ENCODE measurements at regions of chrX and their contacts with region 1.

Region 1: DNA sequence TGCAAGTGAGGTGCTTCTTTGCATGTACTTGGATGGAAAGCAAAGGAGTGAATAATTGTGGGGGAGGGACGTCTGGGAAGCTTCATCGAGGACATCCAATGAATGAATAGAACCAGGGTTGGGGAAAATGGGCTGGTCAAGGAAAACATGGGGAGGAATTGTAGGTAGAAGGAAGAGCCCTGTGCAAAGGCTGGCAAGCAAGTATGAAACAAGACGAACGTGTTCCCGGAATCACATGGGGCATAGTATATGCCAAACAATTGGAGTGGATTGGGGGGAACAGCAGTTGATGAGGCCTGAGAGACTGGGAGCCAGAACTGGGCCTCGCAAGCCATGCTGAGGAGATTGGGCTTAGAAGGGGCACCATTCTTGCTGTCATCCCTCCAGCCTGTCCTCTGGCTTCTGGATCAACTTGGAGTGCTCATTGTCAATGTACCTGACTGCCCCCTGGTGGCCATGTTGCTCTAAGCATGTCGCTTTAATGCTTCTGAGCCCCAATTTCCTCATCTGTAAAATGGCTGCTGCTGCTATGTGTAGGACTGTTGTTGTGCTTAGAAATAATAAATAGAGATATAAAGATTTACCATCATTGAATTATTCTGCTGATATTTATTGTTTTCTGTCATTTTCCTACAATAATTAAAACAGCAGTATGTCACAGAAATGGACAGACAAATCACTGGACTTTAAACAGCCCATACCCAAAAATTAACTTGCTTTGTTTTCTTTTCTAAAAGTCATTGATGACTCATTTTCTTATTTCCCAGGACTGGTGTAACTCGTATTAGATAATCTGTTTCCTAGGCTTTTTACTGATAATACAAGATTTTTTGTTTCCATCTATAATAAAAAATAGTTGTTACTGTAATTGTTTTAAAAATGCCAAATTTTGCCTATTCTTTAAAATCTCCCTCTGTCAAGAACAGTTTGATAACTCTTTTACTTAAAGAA is 66.4 kb downstream of the JADE3 start:
- DNase-seq: peak; percentile 34
- H3K4me3 Mint-ChIP-seq: no peak overlapping the region
- H3K27ac Mint-ChIP-seq: no peak overlapping the region
- H3K4me1 Mint-ChIP-seq: no peaks in the 10 kb centered on the region
- H3K27me3 Mint-ChIP-seq: peaks cover 4% of the 10 kb centered on the region

Region 2: GRCh38 chrX:46251755-46252154 is 726.9 kb before region 1 on chrX:
- intact Hi-C with region 1: no loop called
- DNase-seq: no peak
- H3K4me3 Mint-ChIP-seq: no peak overlapping the region
- H3K27ac Mint-ChIP-seq: no peak overlapping the region
- H3K4me1 Mint-ChIP-seq: no peaks in the 10 kb centered on the region
- H3K27me3 Mint-ChIP-seq: no peaks in the 10 kb centered on the region

Region 3: DNA sequence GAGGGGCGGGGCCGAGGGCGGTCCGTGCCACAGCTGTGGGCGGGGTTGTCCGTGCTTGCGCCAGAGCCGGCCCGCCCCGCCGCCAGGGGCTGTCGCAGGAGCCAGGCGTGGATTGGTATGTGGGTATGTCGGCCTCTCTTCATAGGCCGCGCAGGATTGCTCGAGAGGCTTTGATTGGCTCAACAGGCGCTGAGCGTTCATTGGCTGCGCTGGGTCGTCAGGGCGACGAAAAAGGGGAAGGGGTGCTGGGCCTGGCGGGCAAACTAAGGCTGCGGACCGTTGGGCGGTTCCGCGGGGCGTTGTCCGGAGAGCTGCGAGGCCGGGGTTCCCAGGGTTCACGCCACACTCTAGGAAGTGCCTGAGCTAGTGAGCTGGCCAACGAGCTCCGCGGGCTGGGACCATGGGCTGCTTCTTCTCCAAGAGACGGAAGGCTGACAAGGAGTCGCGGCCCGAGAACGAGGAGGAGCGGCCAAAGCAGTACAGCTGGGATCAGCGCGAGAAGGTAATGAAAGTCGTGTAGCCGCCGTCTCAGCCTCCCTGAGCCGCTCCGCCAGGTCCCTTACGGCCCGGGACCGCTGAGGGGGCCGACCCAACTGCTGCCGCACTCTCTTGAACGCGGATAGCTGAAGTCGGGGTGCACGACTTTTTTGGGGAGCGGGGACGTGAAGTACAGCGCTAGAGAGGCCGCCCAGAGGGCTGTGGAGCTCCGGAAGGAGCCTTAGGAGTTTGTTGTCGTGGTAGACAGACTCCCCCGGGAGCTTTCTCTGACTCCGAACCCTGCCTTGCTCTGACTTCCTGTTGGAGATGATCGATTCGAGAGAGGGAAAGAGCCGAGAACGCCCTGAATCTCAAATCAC is 141.7 kb before region 1 on chrX and contains the start of gene RP2:
- intact Hi-C with region 1: loop called (anchors 1 kb)
- DNase-seq: peak; percentile 79
- H3K4me3 Mint-ChIP-seq: peak within 1 kb of the TSS; percentile 96
- H3K27ac Mint-ChIP-seq: peak within 1 kb of the TSS; percentile 89
- H3K4me1 Mint-ChIP-seq: no peaks in the 10 kb centered on the region
- H3K27me3 Mint-ChIP-seq: peaks cover 4% of the 10 kb centered on the region
- total RNA-seq, gene RP2: 7.1 and 7.5 TPM in 2 replicates

Region 4: DNA sequence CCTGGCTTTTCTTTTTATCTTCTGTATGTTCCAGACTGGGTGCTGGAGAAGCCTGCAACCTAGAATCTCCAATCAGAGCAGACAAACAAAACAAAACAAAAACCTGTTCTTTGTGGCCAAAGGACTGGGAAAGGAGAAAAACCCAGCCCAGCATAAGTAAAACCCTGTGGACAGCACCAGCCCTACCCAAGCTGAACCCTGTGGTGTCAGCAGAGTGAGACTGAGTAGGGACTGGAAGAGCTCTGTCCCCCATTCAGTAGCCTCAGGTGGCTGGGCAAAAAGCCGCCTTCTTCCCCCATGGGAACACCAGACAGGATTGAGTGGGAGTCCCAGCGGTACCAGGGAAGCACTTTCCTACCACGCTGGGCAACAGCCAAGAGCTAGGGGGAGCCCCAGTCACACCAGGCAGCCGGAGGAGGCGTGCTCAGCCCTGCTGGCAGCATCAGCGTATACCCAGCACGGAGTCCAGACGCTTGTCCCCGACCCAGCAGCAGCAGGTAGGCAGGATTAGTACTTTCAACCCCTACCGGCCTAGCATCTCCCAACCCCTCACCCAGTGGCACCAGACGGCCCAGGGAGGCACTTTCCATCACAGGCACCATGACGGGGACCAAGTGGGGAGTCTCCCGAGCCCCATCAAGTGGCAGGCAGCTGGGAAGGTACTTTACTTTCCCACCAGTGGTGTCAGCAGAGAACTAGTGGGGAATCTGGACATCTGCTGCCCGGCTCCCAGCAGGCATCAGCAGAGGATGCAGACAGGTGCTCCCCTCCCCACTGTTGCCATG is 75.0 kb before region 1 on chrX:
- intact Hi-C with region 1: loop called (anchors 1 kb)
- DNase-seq: peak; percentile 24
- H3K4me3 Mint-ChIP-seq: peak overlapping the region; percentile 39
- H3K27ac Mint-ChIP-seq: no peak overlapping the region
- H3K4me1 Mint-ChIP-seq: no peaks in the 10 kb centered on the region
- H3K27me3 Mint-ChIP-seq: peaks cover 14% of the 10 kb centered on the region

Region 5: GRCh38 chrX:46912098-46912602 is 66.5 kb before region 1 on chrX and contains the start of gene JADE3:
- intact Hi-C with region 1: loop called (anchors 2 kb)
- DNase-seq: peak; percentile 3
- H3K4me3 Mint-ChIP-seq: peak within 1 kb of the TSS; percentile 83
- H3K27ac Mint-ChIP-seq: no peak within 1 kb of the TSS
- H3K4me1 Mint-ChIP-seq: peaks cover 11% of the 10 kb centered on the region
- H3K27me3 Mint-ChIP-seq: peaks cover 34% of the 10 kb centered on the region
- total RNA-seq, gene JADE3: 1.3 and 2.1 TPM in 2 replicates